CD4-positive, alpha-beta memory T cell (primary cell): ENCODE measurements at regions of chr20 and their contacts with region 1.

Region 1: GRCh38 chr20:53001498-53002301 is 29.5 kb downstream of the TSHZ2 start:
- DNase-seq: peak in 4 of 5 donors; percentile 30 to 52 (median 38)
- H3K4me3 ChIP-seq: peak overlapping the region; percentile 30 to 39
- H3K4me3 Mint-ChIP-seq: peak overlapping the region; percentile 74 to 92 (median 84)
- H3K27ac ChIP-seq: peak overlapping the region; percentile 41
- H3K27ac Mint-ChIP-seq: peak overlapping the region; percentile 87 to 98 (median 94)
- H3K4me1 ChIP-seq: peaks cover 42% of the 10 kb centered on the region
- H3K4me1 Mint-ChIP-seq: peaks cover 24 to 50% (median 44%) of the 10 kb centered on the region in 4 donors
- H3K27me3 ChIP-seq: no peaks in the 10 kb centered on the region
- H3K27me3 Mint-ChIP-seq: peaks cover 0 to 5% of the 10 kb centered on the region in 2 donors

Region 2: GRCh38 chr20:52852714-52853113 is 149.0 kb before region 1 on chr20:
- CTCF ChIA-PET with region 1: no interaction called
- POLR2A ChIA-PET with region 1: no interaction called
- intact Hi-C with region 1: no loop called
- DNase-seq: no peak
- H3K4me3 ChIP-seq: no peak overlapping the region
- H3K4me3 Mint-ChIP-seq: no peak overlapping the region
- H3K27ac ChIP-seq: no peak overlapping the region
- H3K27ac Mint-ChIP-seq: no peak overlapping the region
- H3K4me1 ChIP-seq: no peaks in the 10 kb centered on the region
- H3K4me1 Mint-ChIP-seq: no peaks in the 10 kb centered on the region
- H3K27me3 ChIP-seq: no peaks in the 10 kb centered on the region
- H3K27me3 Mint-ChIP-seq: peaks cover 0 to 8% of the 10 kb centered on the region in 2 donors

Region 3: GRCh38 chr20:52978851-52979250 is 22.8 kb before region 1 on chr20:
- CTCF ChIA-PET with region 1: interaction called, 21 read pairs
- POLR2A ChIA-PET with region 1: interaction called, 111 read pairs
- intact Hi-C with region 1: loop called (anchors 1 kb)
- DNase-seq: peak in 1 of 5 donors; percentile 11
- H3K4me3 ChIP-seq: no peak overlapping the region
- H3K4me3 Mint-ChIP-seq: peak overlapping the region; percentile 22 to 67 (median 52)
- H3K27ac ChIP-seq: no peak overlapping the region
- H3K27ac Mint-ChIP-seq: peak overlapping the region in 5 of 7 donors; percentile 1 to 87 (median 70)
- H3K4me1 ChIP-seq: peaks cover 44% of the 10 kb centered on the region
- H3K4me1 Mint-ChIP-seq: peaks cover 13 to 41% (median 30%) of the 10 kb centered on the region in 4 donors
- H3K27me3 ChIP-seq: no peaks in the 10 kb centered on the region
- H3K27me3 Mint-ChIP-seq: peaks cover 0 to 19% of the 10 kb centered on the region in 2 donors